ENCODE measurements at regions of chr21 and their contacts with region 1.

Region 1: GRCh38 chr21:25396135-25396711 is 211.1 kb downstream of the MRPL39 start:
- DNase-seq: peak; percentile 58
- H3K4me3 Mint-ChIP-seq: peak overlapping the region; percentile 35
- H3K27ac Mint-ChIP-seq: peak overlapping the region; percentile 78
- H3K4me1 Mint-ChIP-seq: peaks cover 13% of the 10 kb centered on the region
- H3K27me3 Mint-ChIP-seq: no peaks in the 10 kb centered on the region

Region 2: GRCh38 chr21:25362375-25363267 is 33.6 kb before region 1 on chr21:
- intact Hi-C with region 1: loop called (anchors 1 kb)
- DNase-seq: no peak
- H3K4me3 Mint-ChIP-seq: no peak overlapping the region
- H3K27ac Mint-ChIP-seq: peak overlapping the region; percentile 63
- H3K4me1 Mint-ChIP-seq: peaks cover 8% of the 10 kb centered on the region
- H3K27me3 Mint-ChIP-seq: no peaks in the 10 kb centered on the region

Region 3: GRCh38 chr21:25428537-25428936 is 32.3 kb after region 1 on chr21:
- intact Hi-C with region 1: loop called (anchors 2 kb)
- DNase-seq: no peak
- H3K4me3 Mint-ChIP-seq: no peak overlapping the region
- H3K27ac Mint-ChIP-seq: peak overlapping the region; percentile 30
- H3K4me1 Mint-ChIP-seq: peaks cover 46% of the 10 kb centered on the region
- H3K27me3 Mint-ChIP-seq: no peaks in the 10 kb centered on the region

Region 4: DNA sequence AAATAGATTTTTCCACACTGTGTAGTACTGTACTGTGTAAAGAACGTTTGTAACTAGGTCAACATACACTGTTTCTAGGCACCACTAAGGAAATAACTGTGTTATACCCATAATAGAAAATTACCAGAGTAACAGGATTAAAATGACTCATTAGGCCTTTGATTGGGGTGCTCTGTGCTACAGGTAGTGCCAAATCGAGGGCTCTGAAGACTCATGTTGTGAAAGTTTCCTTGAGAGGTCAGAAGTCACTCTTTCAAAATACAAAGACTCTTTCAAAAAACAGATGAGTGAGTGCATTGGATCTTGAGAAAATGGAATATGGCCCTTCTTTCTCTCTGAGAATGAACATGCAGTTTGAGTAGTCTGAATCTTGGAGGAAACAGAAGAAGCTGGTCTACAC is 68.1 kb after region 1 on chr21:
- intact Hi-C with region 1: loop called (anchors 2 kb)
- DNase-seq: no peak
- H3K4me3 Mint-ChIP-seq: peak overlapping the region; percentile 58
- H3K27ac Mint-ChIP-seq: peak overlapping the region; percentile 90
- H3K4me1 Mint-ChIP-seq: peaks cover 62% of the 10 kb centered on the region
- H3K27me3 Mint-ChIP-seq: no peaks in the 10 kb centered on the region

Region 5: DNA sequence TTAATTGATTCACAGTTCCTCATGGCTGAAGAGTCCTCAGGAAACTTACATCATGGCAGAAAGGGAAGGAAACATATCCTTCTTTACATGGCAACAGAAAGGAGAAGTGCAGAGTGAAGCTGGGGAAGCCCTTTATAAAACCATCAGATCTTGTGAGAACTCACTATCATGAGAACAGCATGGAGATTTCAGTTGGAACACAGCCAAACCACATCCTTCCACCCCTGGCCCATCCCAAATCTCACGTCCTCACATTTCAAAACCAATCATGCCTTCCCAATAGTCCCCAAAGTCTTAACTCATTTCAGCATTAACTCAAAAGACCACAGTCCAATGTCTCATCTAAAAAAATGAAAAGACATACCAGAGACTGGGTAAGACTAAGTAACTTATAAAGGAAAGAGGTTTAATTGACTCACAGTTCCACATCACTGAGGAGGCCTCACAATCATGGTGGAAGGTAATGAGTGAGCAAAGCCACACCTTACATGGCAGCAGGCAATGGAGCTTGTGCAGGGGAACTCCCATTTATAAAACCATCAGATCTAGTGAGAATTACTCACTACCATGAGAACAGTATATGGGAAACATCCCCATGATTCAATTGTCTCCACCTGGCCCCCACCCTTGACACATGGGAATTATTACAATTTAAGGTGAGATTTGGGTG is 105.9 kb after region 1 on chr21:
- intact Hi-C with region 1: loop called (anchors 1 kb)
- DNase-seq: no peak
- H3K4me3 Mint-ChIP-seq: no peak overlapping the region
- H3K27ac Mint-ChIP-seq: peak overlapping the region; percentile 84
- H3K4me1 Mint-ChIP-seq: peaks cover 21% of the 10 kb centered on the region
- H3K27me3 Mint-ChIP-seq: no peaks in the 10 kb centered on the region

Region 6: GRCh38 chr21:25561668-25562641 is 165.7 kb after region 1 on chr21:
- intact Hi-C with region 1: loop called (anchors 1 kb)
- DNase-seq: peak; percentile 68
- H3K4me3 Mint-ChIP-seq: peak overlapping the region; percentile 98
- H3K27ac Mint-ChIP-seq: peak overlapping the region; percentile 98
- H3K4me1 Mint-ChIP-seq: peaks cover 69% of the 10 kb centered on the region
- H3K27me3 Mint-ChIP-seq: no peaks in the 10 kb centered on the region

Region 7: DNA sequence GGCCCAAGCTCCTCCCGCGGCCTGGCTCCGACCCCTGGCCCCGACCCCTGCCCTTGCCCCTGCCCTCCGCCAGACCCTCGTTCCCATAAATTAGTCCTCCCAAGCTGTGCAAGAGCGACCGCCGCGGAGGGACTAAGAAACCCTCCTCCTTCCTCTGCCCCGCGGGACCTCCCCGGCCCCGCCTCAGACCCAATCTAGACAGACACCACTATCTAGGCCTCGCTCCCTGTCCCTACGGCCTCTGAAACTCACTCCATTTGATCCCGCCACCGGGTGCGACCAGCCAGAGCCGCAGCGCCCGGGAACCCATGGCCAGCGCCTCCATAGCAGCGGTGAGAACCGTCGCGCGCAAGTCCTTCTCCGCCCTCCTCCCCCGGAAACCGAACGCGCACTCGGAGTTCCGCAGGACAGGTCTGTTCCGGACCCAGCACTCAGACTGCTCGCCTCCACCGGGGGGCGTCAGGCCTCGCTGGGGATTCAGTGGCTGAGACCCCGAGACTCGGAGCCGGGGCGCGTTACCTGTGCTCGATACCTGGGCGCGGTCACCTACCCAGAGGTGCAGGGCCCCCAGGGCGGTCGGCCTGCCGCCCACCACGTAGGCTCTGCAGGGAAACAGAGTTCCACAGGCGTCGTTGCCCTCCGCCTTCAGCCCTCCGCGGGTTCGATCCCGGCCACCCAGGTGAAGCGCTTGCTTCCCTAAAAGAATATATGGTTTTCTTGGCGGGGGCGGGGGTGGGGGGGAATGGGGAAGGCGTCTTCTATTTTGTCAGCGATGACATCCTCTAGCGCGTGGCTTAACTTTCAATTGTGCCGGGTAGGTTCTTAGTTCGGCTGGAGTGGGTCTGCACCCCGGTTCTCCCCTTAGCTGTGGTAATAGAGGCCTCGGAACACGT is 211.2 kb after region 1 on chr21 and contains the start of gene MRPL39:
- intact Hi-C with region 1: loop called (anchors 1 kb)
- DNase-seq: peak; percentile 83
- H3K4me3 Mint-ChIP-seq: peak within 1 kb of the TSS; percentile 100
- H3K27ac Mint-ChIP-seq: peak within 1 kb of the TSS; percentile 100
- H3K4me1 Mint-ChIP-seq: peaks cover 36% of the 10 kb centered on the region
- H3K27me3 Mint-ChIP-seq: no peaks in the 10 kb centered on the region
- total RNA-seq, gene MRPL39: 48.6 and 55.8 TPM in 2 replicates

Measured in activated T-helper 1 cell treated with anti-CD3 and anti-CD28 coated beads, Interleukin-12 subunit alpha, Interleukin-12 subunit beta, Interleukin-2, Interleukin-4 antibody, amounts not matched to agents 30 ng/mL and 10 ng/mL and 1 ng/mL, durations not matched to agents 14 hours and 24 hours and 36 hours (primary cell).